ENCODE measurements at regions of chr14 and their contacts with region 1.

Region 1: DNA sequence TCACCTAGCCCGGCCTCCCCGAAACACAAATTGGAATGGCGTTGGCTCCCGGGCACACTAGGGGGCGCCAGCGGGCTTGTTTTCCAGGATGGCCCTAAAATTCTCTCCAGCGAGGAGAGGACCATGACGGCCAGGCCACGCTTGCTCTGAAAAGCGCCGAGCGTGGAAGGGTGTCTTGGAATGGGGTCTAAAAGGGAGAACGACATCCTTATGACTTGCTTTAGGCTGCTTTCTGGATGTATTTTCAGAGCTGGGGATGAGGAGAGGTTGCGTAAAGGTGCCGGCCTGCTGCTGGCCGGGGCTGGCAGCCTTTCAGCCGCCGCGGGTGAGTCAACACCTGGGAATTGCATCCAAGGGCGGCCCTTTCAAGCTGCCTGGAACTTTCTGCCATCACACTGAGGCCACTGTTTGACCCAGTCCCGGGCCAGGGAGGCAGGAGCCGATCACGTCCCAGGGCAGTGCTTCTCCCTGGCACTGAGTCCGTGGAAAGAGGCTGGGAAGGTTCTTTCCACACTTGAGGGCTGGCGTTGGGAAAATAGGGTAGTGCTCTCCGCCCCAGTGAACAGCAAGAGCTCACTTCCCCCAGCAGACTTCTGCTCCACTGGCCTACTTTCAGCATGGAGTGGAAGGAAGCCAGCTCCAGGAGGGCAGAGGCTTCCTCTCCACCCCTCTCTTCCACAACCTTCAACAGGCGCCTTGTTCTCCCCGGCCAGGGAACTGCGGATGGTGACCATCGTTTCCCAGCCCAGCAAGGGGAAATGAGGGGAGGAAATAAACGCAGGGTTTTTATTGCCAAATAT is 216.2 kb downstream of the TTC8 start:
- DNase-seq: peak; percentile 92 to 97
- ATAC-seq: peak; percentile 94
- H3K4me3 ChIP-seq: no peak overlapping the region
- H3K27ac ChIP-seq: peak overlapping the region in 1 of 2 donors; percentile 80
- H3K4me1 ChIP-seq: no peaks in the 10 kb centered on the region
- H3K27me3 ChIP-seq: no peaks in the 10 kb centered on the region

Region 2: GRCh38 chr14:89107626-89108025 is 67.0 kb after region 1 on chr14:
- intact Hi-C with region 1: no loop called
- DNase-seq: no peak
- ATAC-seq: no peak
- H3K4me3 ChIP-seq: no peak overlapping the region
- H3K27ac ChIP-seq: no peak overlapping the region
- H3K4me1 ChIP-seq: no peaks in the 10 kb centered on the region
- H3K27me3 ChIP-seq: no peaks in the 10 kb centered on the region

Region 3: DNA sequence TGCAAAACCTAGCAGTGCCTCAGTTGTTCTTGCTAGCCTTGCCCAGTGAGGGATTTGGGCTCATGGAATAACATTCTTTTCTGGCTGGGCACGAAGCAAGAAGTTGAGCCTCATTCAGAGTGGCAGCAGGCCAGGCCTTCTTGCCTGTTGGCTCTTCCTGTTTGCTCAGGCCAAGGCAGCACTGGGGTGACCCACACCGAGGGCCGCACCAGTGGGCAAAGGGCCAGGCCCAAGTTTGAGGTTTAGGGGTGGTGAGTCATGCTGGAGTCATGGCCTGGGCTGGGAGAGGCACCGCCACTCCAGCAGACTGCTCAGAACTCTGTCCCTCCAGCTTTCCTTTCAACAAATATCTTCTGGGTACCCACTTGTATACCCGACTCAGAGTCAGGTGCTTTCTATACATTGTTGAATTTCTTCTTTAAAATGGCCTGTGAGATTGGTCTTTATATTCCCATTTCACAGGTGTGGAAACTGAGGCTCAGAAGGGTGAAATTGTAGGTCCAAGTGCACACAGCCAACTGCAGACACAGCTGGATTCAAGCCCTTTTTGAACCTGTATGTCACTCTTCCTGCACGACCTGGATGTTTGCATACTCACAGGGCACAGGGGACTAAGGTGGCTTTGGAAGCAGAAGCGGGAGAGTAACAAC is 97.0 kb after region 1 on chr14:
- intact Hi-C with region 1: loop called in 1 of 2 experiments (anchors 2 kb)
- DNase-seq: peak; percentile 95 to 96
- ATAC-seq: peak; percentile 82
- H3K4me3 ChIP-seq: no peak overlapping the region
- H3K27ac ChIP-seq: peak overlapping the region in 1 of 2 donors; percentile 35
- H3K4me1 ChIP-seq: no peaks in the 10 kb centered on the region
- H3K27me3 ChIP-seq: no peaks in the 10 kb centered on the region

Region 4: GRCh38 chr14:89178802-89179535 is 138.3 kb after region 1 on chr14:
- intact Hi-C with region 1: loop called in 1 of 2 experiments (anchors 5 kb)
- DNase-seq: no peak
- ATAC-seq: no peak
- H3K4me3 ChIP-seq: no peak overlapping the region
- H3K27ac ChIP-seq: peak overlapping the region; percentile 38 to 71
- H3K4me1 ChIP-seq: peaks cover 0 to 2% of the 10 kb centered on the region in 2 donors
- H3K27me3 ChIP-seq: no peaks in the 10 kb centered on the region

Region 5: GRCh38 chr14:89237921-89238529 is 197.4 kb after region 1 on chr14:
- intact Hi-C with region 1: loop called (anchors 2 to 10 kb)
- DNase-seq: no peak
- ATAC-seq: no peak
- H3K4me3 ChIP-seq: no peak overlapping the region
- H3K27ac ChIP-seq: no peak overlapping the region
- H3K4me1 ChIP-seq: peaks cover 3 to 7% of the 10 kb centered on the region in 2 donors
- H3K27me3 ChIP-seq: no peaks in the 10 kb centered on the region